ENCODE measurements at regions of chr22 and their contacts with region 1.

Region 1: DNA sequence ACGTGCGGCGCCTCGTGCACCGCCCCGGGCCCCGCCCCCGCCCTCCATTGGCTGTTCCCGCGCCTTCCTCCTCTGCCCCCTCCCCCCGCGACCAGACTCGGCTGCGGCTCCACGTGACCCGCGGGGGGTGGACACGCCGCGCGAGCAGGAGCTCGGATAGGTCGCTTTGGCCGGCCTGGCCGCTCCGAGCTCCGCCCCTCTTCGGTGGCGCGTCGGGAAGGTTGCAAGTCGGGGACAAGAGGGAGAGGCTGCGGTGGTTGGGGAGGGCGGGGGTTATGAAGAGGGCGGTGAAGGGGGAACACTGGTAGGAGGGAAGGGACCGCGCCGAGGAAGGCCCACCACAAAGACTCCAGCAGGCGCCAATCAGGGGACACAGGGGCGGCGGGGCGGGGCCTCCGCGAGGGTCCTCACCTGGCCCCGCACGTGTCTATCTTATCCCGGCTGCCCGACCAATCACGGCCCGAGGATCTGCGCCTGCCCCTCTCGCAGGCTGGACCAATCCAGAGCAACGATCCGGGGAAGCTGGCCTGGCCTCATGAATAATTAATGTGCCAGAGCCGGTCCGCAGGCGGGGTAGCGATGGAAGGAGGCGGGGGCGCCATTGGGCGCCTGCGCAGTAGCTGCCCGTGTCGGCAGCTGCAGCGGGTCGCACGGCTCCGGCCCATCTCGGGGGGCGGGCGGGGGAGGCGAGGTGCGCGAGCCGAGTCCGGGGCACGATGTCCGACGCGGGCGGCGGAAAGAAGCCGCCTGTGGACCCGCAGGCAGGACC is at the start of gene TEF:
- DNase-seq: peak; percentile 97 to 99 (median 99)
- H3K4me3 ChIP-seq: peak within 1 kb of the TSS; percentile 75
- H3K4me3 Mint-ChIP-seq: peak within 1 kb of the TSS; percentile 87 to 98 (median 92)
- H3K27ac ChIP-seq: peak within 1 kb of the TSS; percentile 79
- H3K27ac Mint-ChIP-seq: peak within 1 kb of the TSS; percentile 78 to 98 (median 96)
- H3K4me1 ChIP-seq: peaks cover 6% of the 10 kb centered on the region
- H3K4me1 Mint-ChIP-seq: peaks cover 9 to 21% (median 20%) of the 10 kb centered on the region in 3 donors
- H3K27me3 ChIP-seq: no peaks in the 10 kb centered on the region
- H3K27me3 Mint-ChIP-seq: no peaks in the 10 kb centered on the region
- total RNA-seq, gene TEF: 1.8 to 3.5 TPM

Region 2: DNA sequence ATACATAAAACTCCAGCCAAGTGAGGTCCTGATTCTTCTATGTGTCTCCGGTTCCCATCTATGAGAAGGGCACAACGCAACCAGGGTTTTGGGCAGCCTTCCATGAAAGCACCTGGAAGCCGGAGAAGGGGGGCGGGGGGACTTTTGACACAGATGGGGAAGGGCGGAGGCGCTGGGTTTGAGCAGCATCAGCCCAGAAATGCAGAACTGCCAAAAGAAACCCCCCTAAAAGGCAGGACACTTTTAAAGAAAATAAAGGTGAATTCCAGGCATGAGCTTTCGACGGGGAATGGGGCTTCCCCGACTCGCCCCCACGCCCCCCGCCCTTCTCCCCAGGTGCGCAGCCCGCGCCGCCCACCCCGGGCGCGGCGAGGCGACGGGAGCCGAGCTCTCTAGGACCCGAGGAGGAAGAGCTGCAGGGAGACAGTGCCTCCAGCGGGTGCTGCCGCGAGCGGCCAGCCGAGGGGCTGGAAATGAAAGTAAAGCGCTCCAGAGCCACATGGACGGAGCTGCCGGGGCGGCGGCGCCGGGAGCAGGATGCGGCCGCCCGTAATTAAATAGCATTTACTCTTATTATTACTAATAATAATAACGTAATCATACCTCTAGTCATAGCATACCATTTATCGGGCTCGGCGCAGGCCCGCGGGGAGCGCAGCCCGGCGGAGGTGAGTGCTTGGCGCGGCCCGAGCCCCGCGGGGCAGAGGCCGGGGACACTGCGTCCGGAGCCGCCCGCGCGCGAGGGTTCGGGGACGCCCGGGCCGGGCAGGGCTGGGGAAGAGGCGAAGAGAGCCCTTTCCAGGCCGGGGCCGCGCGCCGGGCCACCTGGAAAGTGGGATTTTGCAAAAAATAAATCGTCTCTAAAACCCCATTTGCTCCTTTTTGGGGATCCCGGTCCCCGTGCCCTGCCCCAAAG is 80.2 kb before region 1 on chr22 and contains the start of gene ZC3H7B:
- CTCF ChIA-PET with region 1: interaction called, 4 read pairs
- POLR2A ChIA-PET with region 1: interaction called, 10 read pairs
- DNase-seq: peak; percentile 78 to 89 (median 81)
- H3K4me3 ChIP-seq: peak within 1 kb of the TSS; percentile 59
- H3K4me3 Mint-ChIP-seq: peak within 1 kb of the TSS; percentile 83 to 95 (median 90)
- H3K27ac ChIP-seq: peak within 1 kb of the TSS; percentile 81
- H3K27ac Mint-ChIP-seq: peak within 1 kb of the TSS; percentile 72 to 98 (median 93)
- H3K4me1 ChIP-seq: peaks cover 16% of the 10 kb centered on the region
- H3K4me1 Mint-ChIP-seq: peaks cover 26 to 36% (median 31%) of the 10 kb centered on the region in 3 donors
- H3K27me3 ChIP-seq: no peaks in the 10 kb centered on the region
- H3K27me3 Mint-ChIP-seq: no peaks in the 10 kb centered on the region
- total RNA-seq, gene ZC3H7B: 58.9 to 59.9 TPM

Region 3: DNA sequence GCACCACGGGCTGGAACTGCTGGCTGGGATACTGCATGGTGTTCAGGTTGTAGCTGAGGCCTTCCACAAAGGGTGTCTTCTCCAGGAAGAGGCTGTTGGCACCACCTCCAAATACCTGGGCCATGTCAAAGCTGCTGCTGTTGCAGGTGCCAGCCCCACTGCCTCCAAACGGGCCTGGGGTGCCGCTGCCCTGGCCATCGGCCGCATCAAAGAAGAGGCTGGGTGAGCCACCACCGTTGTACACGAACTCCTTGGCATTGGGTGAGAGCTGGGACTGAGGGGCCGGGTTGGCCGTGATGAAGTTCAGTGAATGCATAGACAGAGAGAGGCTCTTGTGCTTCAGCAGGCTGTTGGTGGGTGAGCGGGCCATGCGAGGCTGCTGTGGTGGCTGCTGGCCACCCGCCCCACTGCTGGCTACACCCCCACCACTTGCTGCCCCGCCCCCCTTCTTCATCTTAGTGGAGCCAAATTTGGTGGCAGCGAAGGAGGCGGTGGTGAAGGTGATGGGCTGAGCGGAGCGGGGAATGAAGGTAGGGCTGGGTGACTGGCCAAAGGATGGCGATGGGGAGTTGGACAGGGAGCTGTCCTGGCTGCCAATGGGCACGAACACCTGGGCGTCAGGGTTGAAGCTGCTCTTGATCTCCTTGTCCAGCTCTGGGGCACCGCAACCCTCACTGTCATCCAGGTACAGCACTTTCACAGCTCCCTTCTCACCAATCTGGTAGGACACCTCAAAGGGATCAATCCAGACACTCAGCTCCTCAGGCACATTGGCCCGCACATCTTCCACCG is 55.0 kb after region 1 on chr22:
- CTCF ChIA-PET with region 1: no interaction called
- POLR2A ChIA-PET with region 1: no interaction called
- DNase-seq: no peak
- H3K4me3 ChIP-seq: no peak overlapping the region
- H3K4me3 Mint-ChIP-seq: no peak overlapping the region
- H3K27ac ChIP-seq: no peak overlapping the region
- H3K27ac Mint-ChIP-seq: peak overlapping the region in 2 of 8 donors; percentile 38 to 88
- H3K4me1 ChIP-seq: no peaks in the 10 kb centered on the region
- H3K4me1 Mint-ChIP-seq: peaks cover 9 to 36% (median 14%) of the 10 kb centered on the region in 3 donors
- H3K27me3 ChIP-seq: no peaks in the 10 kb centered on the region
- H3K27me3 Mint-ChIP-seq: no peaks in the 10 kb centered on the region

Region 4: GRCh38 chr22:41468381-41469217 is 87.1 kb after region 1 on chr22 and contains the starts of genes ACO2 and PHF5A:
- CTCF ChIA-PET with region 1: no interaction called
- POLR2A ChIA-PET with region 1: interaction called, 23 read pairs
- DNase-seq: peak; percentile 96 to 99 (median 98)
- H3K4me3 ChIP-seq: peak within 1 kb of the TSS; percentile 72
- H3K4me3 Mint-ChIP-seq: peak within 1 kb of the TSS; percentile 85 to 93 (median 89)
- H3K27ac ChIP-seq: peak within 1 kb of the TSS; percentile 99
- H3K27ac Mint-ChIP-seq: peak within 1 kb of the TSS; percentile 97 to 100 (median 99)
- H3K4me1 ChIP-seq: peaks cover 22% of the 10 kb centered on the region
- H3K4me1 Mint-ChIP-seq: peaks cover 44 to 71% (median 60%) of the 10 kb centered on the region in 3 donors
- H3K27me3 ChIP-seq: no peaks in the 10 kb centered on the region
- H3K27me3 Mint-ChIP-seq: no peaks in the 10 kb centered on the region
- total RNA-seq, gene ACO2: 112 to 114 TPM
- total RNA-seq, gene PHF5A: 120 to 125 TPM

Region 5: GRCh38 chr22:41589391-41590241 is 208.1 kb after region 1 on chr22 and contains the start of gene PMM1:
- CTCF ChIA-PET with region 1: no interaction called
- POLR2A ChIA-PET with region 1: interaction called, 12 read pairs
- DNase-seq: peak; percentile 100
- H3K4me3 ChIP-seq: peak within 1 kb of the TSS; percentile 90
- H3K4me3 Mint-ChIP-seq: peak within 1 kb of the TSS; percentile 78 to 97 (median 93)
- H3K27ac ChIP-seq: peak within 1 kb of the TSS; percentile 72
- H3K27ac Mint-ChIP-seq: peak within 1 kb of the TSS; percentile 11 to 93 (median 87)
- H3K4me1 ChIP-seq: peaks cover 9% of the 10 kb centered on the region
- H3K4me1 Mint-ChIP-seq: peaks cover 13 to 30% (median 23%) of the 10 kb centered on the region in 3 donors
- H3K27me3 ChIP-seq: no peaks in the 10 kb centered on the region
- H3K27me3 Mint-ChIP-seq: no peaks in the 10 kb centered on the region
- total RNA-seq, gene PMM1: 27.5 to 33.2 TPM

Region 6: DNA sequence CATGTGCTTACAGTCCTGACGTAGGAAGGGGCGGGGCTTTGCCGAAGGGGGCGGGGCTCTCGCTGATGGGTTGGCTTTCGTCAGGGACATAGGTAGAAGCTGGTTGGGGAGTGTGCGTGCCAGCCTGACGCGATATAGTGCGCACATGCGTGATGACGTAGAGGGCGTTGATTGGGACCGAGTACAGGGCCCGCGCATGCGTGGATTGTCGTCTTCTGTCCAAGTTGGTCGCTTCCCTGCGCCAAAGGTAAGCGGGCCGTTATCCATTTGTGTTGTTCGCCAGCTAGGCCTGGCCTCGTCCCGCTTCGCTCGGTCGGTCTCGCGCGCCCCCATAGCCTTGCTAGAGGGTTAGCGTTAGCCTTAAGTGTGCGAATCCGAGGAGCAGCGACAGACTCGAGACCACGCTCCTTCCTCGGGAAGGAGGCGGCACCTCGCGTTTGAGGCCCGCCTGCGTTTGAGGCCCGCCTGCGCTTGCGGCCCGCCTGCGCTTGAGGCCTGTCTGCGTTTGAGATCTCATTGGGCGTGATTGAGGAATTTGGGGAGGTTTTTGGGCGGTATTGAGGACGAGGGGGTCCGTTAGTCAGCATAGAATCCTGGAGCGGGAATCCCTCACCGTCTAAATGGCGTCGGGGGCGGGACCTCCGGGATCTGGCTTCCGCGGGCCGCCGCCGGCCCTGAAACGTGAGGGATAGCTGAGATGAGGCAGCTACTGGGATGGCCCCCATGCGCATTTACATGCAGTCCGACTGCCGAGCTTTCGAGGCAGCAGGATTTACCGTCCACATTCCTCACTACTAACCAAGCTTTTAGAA is 239.8 kb after region 1 on chr22 and contains the start of gene XRCC6:
- CTCF ChIA-PET with region 1: no interaction called
- POLR2A ChIA-PET with region 1: interaction called, 10 read pairs
- DNase-seq: peak; percentile 99 to 100 (median 100)
- H3K4me3 ChIP-seq: peak within 1 kb of the TSS; percentile 93
- H3K4me3 Mint-ChIP-seq: peak within 1 kb of the TSS; percentile 91 to 100 (median 95)
- H3K27ac ChIP-seq: peak within 1 kb of the TSS; percentile 99
- H3K27ac Mint-ChIP-seq: peak within 1 kb of the TSS; percentile 98 to 100 (median 99)
- H3K4me1 ChIP-seq: peaks cover 30% of the 10 kb centered on the region
- H3K4me1 Mint-ChIP-seq: peaks cover 32 to 66% (median 44%) of the 10 kb centered on the region in 3 donors
- H3K27me3 ChIP-seq: no peaks in the 10 kb centered on the region
- H3K27me3 Mint-ChIP-seq: peaks cover 0 to 1% of the 10 kb centered on the region in 2 donors
- total RNA-seq, gene XRCC6: 447 to 453 TPM

Measured in CD8-positive, alpha-beta memory T cell (primary cell).